Adrenal gland (tissue), 19 donors: ENCODE measurements at regions of chr14 and their contacts with region 1.

Region 1: GRCh38 chr14:64986578-64987571 is at the start of gene FNTB:
- DNase-seq: peak; percentile 96 to 98 (median 96)
- H3K4me3 ChIP-seq: peak within 1 kb of the TSS; percentile 52 to 85 (median 67)
- H3K27ac ChIP-seq: peak within 1 kb of the TSS; percentile 73 to 94 (median 89)
- H3K4me1 ChIP-seq: peaks cover 7 to 22% of the 10 kb centered on the region in 2 donors
- H3K27me3 ChIP-seq: no peaks in the 10 kb centered on the region
- CTCF ChIP-seq: peak; percentile 35 to 93 (median 80)
- POLR2A ChIP-seq: peak in 1 of 2 donors; percentile 67
- total RNA-seq, gene FNTB: 12.2 to 27.2 (median 23.9) TPM

Region 2: GRCh38 chr14:64720131-64720576 is 266.7 kb before region 1 on chr14:
- intact Hi-C with region 1: no loop called
- DNase-seq: no peak
- H3K4me3 ChIP-seq: no peak overlapping the region
- H3K27ac ChIP-seq: no peak overlapping the region
- H3K4me1 ChIP-seq: peaks cover 0 to 11% of the 10 kb centered on the region in 2 donors
- H3K27me3 ChIP-seq: no peaks in the 10 kb centered on the region
- CTCF ChIP-seq: no peak
- POLR2A ChIP-seq: no peak

Region 3: GRCh38 chr14:64823305-64823861 is 163.5 kb before region 1 on chr14:
- intact Hi-C with region 1: loop called in 1 of 2 experiments (anchors 5 kb)
- DNase-seq: peak; percentile 71 to 88 (median 82)
- H3K4me3 ChIP-seq: no peak overlapping the region
- H3K27ac ChIP-seq: no peak overlapping the region
- H3K4me1 ChIP-seq: no peaks in the 10 kb centered on the region
- H3K27me3 ChIP-seq: no peaks in the 10 kb centered on the region
- CTCF ChIP-seq: peak; percentile 71 to 86 (median 78)
- POLR2A ChIP-seq: no peak

Region 4: GRCh38 chr14:64914237-64914971 is 72.5 kb before region 1 on chr14 and contains the start of gene CHURC1:
- intact Hi-C with region 1: loop called in 1 of 2 experiments (anchors 5 kb)
- DNase-seq: peak; percentile 99 to 100 (median 99)
- H3K4me3 ChIP-seq: peak within 1 kb of the TSS; percentile 30 to 94 (median 86)
- H3K27ac ChIP-seq: peak within 1 kb of the TSS; percentile 92 to 99 (median 95)
- H3K4me1 ChIP-seq: peaks cover 20 to 41% of the 10 kb centered on the region in 2 donors
- H3K27me3 ChIP-seq: no peaks in the 10 kb centered on the region
- CTCF ChIP-seq: peak in 1 of 6 experiments; percentile 12
- POLR2A ChIP-seq: peak; percentile 82 to 91
- total RNA-seq, gene CHURC1: 54.4 to 101 (median 74.7) TPM

Region 5: GRCh38 chr14:65019944-65020566 is 33.2 kb after region 1 on chr14:
- intact Hi-C with region 1: loop called (anchors 5 kb)
- DNase-seq: peak; percentile 36 to 81 (median 51)
- H3K4me3 ChIP-seq: no peak overlapping the region
- H3K27ac ChIP-seq: no peak overlapping the region
- H3K4me1 ChIP-seq: peaks cover 0 to 11% of the 10 kb centered on the region in 2 donors
- H3K27me3 ChIP-seq: no peaks in the 10 kb centered on the region
- CTCF ChIP-seq: peak; percentile 63 to 91 (median 82)
- POLR2A ChIP-seq: no peak